A673 (cell line): ENCODE measurements at regions of chr13 and their contacts with region 1.

Region 1: DNA sequence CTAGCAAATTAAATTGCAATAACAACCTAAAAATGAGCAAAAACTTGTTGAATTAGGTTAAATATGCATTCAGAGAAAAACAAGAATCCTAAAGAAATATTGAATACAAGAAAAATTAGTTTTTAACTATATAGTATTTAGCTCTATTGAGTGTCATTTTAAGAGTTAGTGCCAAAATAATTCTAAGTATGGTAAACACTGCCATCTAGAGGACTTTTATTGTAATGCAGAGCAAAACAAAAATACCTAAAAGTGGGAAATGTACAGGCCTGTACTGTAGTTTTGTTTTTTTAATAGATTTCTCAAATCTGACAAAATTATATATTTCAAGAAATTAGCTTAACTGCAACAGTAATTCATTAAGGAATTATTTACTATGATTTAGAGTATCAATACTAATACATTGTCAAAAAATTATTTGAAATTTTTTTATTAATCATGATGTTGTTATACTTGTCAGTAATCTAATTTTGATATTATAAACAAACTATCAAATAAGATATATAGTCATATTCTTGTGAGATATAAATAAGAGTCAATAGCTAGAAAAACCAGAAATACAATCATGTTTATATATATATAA is 8.2 kb upstream of the PCDH9 start:
- DNase-seq: peak; percentile 45
- H3K4me3 ChIP-seq: no peak overlapping the region
- H3K27ac ChIP-seq: no peak overlapping the region
- H3K4me1 ChIP-seq: no peaks in the 10 kb centered on the region
- H3K27me3 ChIP-seq: peaks cover under 1% of the 10 kb centered on the region
- CTCF ChIP-seq: peak; percentile 67

Region 2: GRCh38 chr13:65656740-65657329 is 1581.5 kb before region 1 on chr13:
- CTCF ChIA-PET with region 1: no interaction called
- POLR2A ChIA-PET with region 1: no interaction called
- intact Hi-C with region 1: loop called (anchors 5 kb)
- DNase-seq: peak; percentile 13
- H3K4me3 ChIP-seq: no peak overlapping the region
- H3K27ac ChIP-seq: no peak overlapping the region
- H3K4me1 ChIP-seq: no peaks in the 10 kb centered on the region
- H3K27me3 ChIP-seq: no peaks in the 10 kb centered on the region
- CTCF ChIP-seq: peak; percentile 65

Region 3: GRCh38 chr13:67369895-67370660 is 131.7 kb after region 1 on chr13:
- CTCF ChIA-PET with region 1: no interaction called
- POLR2A ChIA-PET with region 1: no interaction called
- intact Hi-C with region 1: no loop called
- DNase-seq: no peak
- H3K4me3 ChIP-seq: no peak overlapping the region
- H3K27ac ChIP-seq: no peak overlapping the region
- H3K4me1 ChIP-seq: no peaks in the 10 kb centered on the region
- H3K27me3 ChIP-seq: no peaks in the 10 kb centered on the region
- CTCF ChIP-seq: no peak

Region 4: DNA sequence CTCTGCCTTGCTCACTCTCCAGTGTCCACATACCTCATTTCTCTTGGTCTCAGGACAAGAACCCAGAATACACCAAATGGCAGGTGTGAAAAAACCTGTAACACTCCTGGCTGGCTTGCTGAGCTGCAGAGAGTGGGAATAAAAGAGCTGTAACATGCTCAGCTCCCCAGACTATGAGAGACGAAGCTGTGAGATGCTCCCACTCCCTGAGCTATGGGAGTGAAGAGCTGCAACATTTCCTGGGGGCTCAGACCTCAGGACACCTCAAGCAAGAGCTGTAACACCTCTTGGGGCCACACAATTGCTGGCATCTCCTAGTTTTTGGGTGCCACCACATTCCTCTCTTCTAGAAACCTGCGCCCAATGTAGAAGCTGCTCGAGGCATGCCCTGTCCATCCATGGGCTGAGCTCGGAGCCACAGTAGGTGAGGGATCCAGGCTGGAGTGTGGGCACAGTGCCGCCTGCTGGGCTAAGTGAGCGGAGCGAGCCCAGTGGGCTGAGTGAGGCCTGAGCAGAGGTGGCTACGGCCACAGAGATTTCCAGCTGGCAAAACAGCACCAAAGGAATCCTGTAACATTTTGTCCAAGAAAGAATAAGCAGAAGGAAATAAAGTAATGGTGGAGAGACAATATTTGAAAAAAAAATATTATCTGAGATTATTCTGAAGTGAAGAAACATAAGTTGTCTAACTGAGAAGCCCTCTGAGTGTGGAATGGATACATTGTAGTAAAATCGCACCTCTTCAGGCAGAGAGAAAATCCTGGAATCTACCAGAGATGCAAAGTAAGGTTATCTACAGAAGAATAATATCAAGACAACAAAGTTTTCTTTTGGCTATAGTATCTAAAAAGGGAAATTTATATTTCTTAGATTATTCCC is 177.9 kb after region 1 on chr13:
- CTCF ChIA-PET with region 1: no interaction called
- POLR2A ChIA-PET with region 1: no interaction called
- intact Hi-C with region 1: loop called (anchors 10 kb)
- DNase-seq: peak; percentile 33
- H3K4me3 ChIP-seq: no peak overlapping the region
- H3K27ac ChIP-seq: no peak overlapping the region
- H3K4me1 ChIP-seq: no peaks in the 10 kb centered on the region
- H3K27me3 ChIP-seq: no peaks in the 10 kb centered on the region
- CTCF ChIP-seq: peak; percentile 74